HEK293T (cell line): ENCODE measurements at regions of chr6 and their contacts with region 1.

Region 1: GRCh38 chr6:31971993-31972708 is at the start of gene DXO:
- DNase-seq: peak; percentile 95

Region 2: GRCh38 chr6:31729515-31729978 is 242.6 kb before region 1 on chr6:
- CTCF ChIA-PET with region 1: no interaction called
- POLR2A ChIA-PET with region 1: no interaction called
- DNase-seq: peak; percentile 77

Region 3: GRCh38 chr6:31815025-31815838 is 156.9 kb before region 1 on chr6 and contains the starts of genes HSPA1A and HSPA1L:
- CTCF ChIA-PET with region 1: no interaction called
- POLR2A ChIA-PET with region 1: no interaction called
- DNase-seq: no peak

Region 4: GRCh38 chr6:31842056-31842455 is 130.1 kb before region 1 on chr6:
- CTCF ChIA-PET with region 1: no interaction called
- POLR2A ChIA-PET with region 1: no interaction called
- DNase-seq: no peak

Region 5: DNA sequence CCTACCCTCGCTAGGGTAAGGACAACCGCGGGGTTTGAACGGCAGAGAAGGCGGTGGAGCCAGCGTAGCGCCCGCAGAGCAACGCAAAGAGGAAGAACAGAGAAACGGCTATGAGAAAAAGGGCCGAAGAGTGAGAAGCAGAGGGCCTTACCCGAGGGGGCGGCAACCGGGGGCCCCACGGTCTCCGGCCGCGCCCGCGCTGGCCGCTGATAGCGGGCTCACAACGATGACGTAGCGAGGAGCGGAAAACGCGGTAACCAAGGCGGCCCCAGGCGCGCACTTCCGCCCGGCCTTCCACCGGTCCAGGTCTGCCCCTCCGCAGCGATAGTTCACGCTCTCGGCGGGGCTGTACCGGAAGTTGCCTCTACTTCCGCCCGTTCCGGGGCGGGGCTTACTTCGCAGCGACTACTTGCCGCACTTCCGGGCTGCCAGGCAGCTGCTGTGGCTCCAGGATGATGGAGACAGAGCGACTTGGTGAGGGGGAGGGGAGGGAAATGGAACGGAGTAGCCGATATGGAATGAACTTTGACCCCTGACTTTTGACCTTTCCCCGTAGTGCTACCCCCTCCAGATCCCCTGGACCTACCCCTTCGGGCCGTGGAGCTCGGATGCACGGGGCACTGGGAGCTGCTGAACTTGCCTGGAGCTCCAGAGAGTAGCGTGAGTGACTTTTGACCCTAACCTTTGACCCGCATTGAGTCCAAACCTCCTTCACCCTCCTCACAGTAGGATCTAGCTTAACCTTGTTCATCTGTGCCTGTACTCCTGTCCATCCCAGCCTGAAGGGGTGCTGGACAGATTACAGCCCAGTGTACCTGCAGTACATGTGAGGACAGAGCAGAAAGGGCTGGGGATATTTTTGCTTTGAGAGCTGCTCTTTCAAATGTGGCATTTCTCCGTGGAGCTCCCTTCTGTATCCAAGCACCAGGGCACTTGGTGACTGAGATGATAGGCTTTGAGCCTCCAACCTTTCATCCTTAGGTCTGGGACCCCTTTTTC is 13.1 kb before region 1 on chr6 and contains the starts of genes NELFE and SKIC2:
- CTCF ChIA-PET with region 1: interaction called, 3 read pairs
- POLR2A ChIA-PET with region 1: interaction called, 84 read pairs
- DNase-seq: peak; percentile 100